Sigmoid colon (tissue), 7 donors: ENCODE measurements at regions of chr19 and their contacts with region 1.

Region 1: DNA sequence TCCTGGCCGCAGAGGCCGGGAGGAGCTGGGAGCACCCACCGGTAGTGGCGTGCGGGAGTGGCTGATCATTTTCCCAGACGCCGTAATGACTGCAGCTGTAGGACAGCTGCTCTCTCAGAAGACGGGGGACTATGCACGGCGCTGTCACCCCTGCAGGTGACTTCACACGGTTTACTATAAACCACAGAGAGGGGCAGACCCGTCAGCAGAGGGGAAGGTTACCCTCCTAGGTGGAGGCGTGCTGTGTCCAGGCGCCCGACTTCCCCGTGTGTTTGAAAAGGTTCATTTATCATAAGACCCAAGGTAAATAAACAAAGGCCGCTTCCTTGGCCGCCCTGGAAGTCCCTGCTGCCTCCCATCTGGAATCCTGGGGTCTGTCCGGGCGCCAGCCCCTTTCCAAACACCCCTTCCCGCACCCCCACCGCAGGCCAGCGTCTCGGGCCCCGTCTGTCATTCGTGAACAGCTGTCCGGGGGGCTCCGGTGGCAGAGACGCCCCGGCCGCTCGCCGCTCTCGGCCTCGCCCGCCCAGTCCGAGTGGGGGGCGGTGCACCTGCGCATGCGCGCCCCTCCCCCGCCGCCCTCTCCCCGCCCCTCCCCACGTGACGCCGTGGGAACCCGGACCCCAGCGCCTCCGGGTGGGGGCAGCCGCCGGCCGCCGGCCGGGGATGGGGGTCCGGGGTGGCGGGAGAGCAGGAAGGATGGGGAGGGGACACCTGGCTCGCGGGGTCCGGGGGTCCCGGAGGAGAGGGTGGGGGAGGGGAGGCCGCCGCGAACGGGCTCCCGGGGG is 915 bp downstream of the SHC2 start:
- DNase-seq: peak; percentile 89
- H3K4me3 ChIP-seq: peak overlapping the region; percentile 67 to 92 (median 84)
- H3K27ac ChIP-seq: peak overlapping the region; percentile 82 to 90 (median 86)
- H3K4me1 ChIP-seq: peaks cover 0 to 21% (median 18%) of the 10 kb centered on the region in 4 donors
- H3K27me3 ChIP-seq: no peaks in the 10 kb centered on the region
- CTCF ChIP-seq: no peak
- EP300 ChIP-seq: no peak
- POLR2A ChIP-seq: peak in 1 of 2 donors; percentile 52

Region 2: DNA sequence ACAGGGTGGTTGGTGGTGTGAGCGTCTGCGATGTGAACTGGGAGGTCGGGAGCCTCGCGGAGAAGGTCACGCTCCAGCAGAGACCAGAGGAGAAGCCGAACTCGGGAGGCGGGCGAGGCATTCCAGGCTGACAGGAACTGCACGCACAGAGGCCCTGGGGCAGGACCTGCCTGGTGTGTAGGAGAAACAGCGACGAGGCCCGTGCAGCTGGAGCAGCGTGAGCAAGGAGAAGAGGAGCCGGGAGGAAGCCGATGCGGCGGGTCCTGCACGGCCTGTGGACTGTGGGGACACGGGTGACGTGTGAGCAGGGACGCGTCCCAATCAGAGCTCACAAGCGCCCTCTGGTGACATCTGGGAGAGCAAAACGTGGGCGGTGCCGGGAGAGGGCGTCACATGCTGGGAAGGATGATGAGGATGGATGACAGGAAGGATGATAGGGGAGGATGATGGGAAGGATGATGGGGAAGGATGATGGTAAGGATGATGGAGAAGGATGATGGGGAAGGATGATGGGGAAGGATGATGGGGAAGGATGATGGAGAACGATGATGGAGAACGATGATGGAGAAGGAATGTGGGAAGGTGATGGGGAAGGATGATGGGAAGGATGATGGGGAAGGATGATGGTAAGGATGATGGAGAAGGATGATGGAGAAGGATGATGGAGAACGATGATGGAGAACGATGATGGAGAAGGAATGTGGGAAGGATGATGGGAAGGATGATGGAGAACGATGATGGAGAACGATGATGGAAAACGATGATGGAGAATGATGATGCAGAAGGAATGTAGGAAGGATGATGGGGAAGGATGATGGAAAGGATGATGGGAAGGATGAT is 20.3 kb after region 1 on chr19:
- intact Hi-C with region 1: loop called (anchors 2 kb)
- DNase-seq: peak; percentile 91
- H3K4me3 ChIP-seq: peak overlapping the region in 2 of 4 donors; percentile 32 to 34
- H3K27ac ChIP-seq: peak overlapping the region in 2 of 4 donors; percentile 48 to 51
- H3K4me1 ChIP-seq: peaks cover 0 to 7% (median 3%) of the 10 kb centered on the region in 4 donors
- H3K27me3 ChIP-seq: peaks cover 0 to 14% (median 5%) of the 10 kb centered on the region in 3 donors
- CTCF ChIP-seq: peak; percentile 56 to 69 (median 63)
- EP300 ChIP-seq: no peak
- POLR2A ChIP-seq: no peak

Region 3: GRCh38 chr19:506404-507285 is 46.7 kb after region 1 on chr19:
- intact Hi-C with region 1: loop called (anchors 2 kb)
- DNase-seq: peak; percentile 100
- H3K4me3 ChIP-seq: peak overlapping the region; percentile 82 to 100 (median 98)
- H3K27ac ChIP-seq: peak overlapping the region; percentile 88 to 98 (median 96)
- H3K4me1 ChIP-seq: peaks cover 0 to 34% (median 31%) of the 10 kb centered on the region in 4 donors
- H3K27me3 ChIP-seq: no peaks in the 10 kb centered on the region
- CTCF ChIP-seq: peak; percentile 96 to 100 (median 99)
- EP300 ChIP-seq: no peak
- POLR2A ChIP-seq: no peak